ENCODE measurements at regions of chr11 and their contacts with region 1.

Region 1: DNA sequence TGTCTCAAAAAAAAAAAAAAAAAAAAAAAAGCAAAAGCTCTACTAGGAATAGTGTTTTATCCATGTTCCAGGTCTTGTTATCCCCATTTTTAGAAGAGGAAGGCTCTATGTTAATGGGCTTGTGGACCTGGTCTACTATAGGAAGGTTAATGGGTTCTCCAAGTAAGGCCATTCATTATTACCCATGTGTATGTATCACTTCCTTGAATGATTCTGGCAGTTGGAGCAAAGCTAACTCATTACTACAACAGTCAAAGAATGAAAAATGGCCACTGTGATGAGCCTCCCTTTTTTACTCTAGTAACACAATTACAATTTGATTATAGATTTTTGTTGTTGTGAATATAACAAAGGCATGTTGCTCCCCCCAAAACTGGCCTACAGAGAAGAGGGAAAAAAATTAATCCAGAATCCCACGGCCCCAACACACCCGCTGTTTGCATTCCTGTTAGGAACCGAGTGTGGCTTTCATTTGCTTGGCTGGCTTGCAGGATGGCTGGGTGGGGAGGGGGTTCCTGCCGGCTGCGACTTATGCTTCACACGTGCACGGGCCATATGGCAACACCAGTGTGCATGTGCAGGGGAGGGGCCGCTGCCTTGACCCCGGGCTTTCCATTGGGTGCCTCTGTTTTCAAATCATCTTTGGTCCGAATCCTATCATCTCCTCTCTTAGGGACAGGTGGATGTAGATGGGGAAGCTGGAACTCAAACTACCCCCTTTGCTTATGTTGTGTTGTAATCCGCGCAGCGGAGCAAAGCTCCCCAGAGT is 148.8 kb downstream of the HIPK3 start:
- DNase-seq: no peak
- ATAC-seq: no peak
- H3K4me3 ChIP-seq: no peak overlapping the region
- H3K27ac ChIP-seq: no peak overlapping the region
- H3K4me1 ChIP-seq: peaks cover 4% of the 10 kb centered on the region; the same call in 1 of the 2 replicates
- H3K27me3 ChIP-seq: no peaks in the 10 kb centered on the region
- CTCF ChIP-seq: no peak
- EP300 ChIP-seq: no peak
- POLR2A ChIP-seq: no peak
- RAD21 ChIP-seq: no peak

Region 2: GRCh38 chr11:33633241-33633901 is 227.4 kb after region 1 on chr11:
- CTCF ChIA-PET with region 1: no interaction called
- POLR2A ChIA-PET with region 1: interaction called, 10 read pairs
- RAD21 ChIA-PET with region 1: no interaction called
- SMC1A ChIA-PET with region 1: no interaction called
- in situ Hi-C with region 1: no loop called
- intact Hi-C with region 1: no loop called
- DNase-seq: no peak
- ATAC-seq: no peak; the same call in 2 of the 3 replicates
- H3K4me3 ChIP-seq: no peak overlapping the region
- H3K27ac ChIP-seq: no peak overlapping the region
- H3K4me1 ChIP-seq: peaks cover 4% of the 10 kb centered on the region; the same call in 1 of the 2 replicates
- H3K27me3 ChIP-seq: no peaks in the 10 kb centered on the region
- CTCF ChIP-seq: no peak
- EP300 ChIP-seq: no peak
- POLR2A ChIP-seq: no peak
- RAD21 ChIP-seq: no peak

Measured in GM12878 (cell line).